Body of pancreas (tissue), 4 donors: ENCODE measurements at regions of chr4 and their contacts with region 1.

Region 1: DNA sequence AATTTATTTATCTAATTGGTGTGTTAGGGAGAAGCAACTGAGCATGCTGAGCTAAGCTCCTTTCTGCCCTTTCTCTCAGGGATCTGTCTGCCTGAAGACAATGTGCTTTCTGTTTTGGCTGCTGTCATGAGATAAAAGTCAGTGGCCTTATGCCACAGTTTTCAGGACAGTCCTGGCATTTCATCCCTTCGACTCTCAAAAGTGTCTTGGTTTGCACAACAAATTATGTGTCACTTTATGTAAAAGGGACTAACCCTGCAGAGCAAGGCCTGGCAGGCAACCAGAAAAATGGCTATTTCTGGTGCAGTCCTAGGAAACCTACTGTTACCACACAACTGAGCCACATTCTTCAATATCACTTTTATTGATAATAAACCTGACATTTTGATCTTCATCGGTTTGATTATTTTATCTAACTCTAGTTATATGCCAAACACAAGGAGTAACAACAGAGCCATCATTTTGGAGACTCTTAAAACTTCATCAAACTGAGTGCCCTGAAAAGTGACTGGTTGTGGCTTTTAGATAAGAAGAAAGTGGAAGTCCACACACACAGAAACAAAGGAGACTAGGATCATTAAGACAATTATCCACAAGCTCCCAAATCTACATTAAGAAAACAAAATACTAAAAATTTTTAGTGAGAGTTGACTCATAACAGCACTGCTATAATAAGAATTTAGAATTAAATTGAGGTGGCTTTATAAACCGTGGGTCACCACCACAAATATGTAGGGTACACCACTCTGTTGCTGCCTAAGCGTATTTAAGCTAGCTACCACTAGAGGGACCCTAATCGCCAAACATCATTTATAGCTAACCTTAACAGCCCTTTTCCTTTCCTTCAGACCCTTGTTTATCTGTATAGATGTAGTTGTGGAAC is 95.9 kb upstream of the PTPN13 start:
- DNase-seq: peak in 2 of 4 donors; percentile 11 to 41
- ATAC-seq: peak; percentile 74
- H3K4me3 ChIP-seq: no peak overlapping the region
- H3K27ac ChIP-seq: no peak overlapping the region
- H3K4me1 ChIP-seq: peaks cover 19% of the 10 kb centered on the region
- H3K27me3 ChIP-seq: no peaks in the 10 kb centered on the region
- CTCF ChIP-seq: peak; percentile 60 to 75 (median 68)
- POLR2A ChIP-seq: no peak

Region 2: GRCh38 chr4:86778175-86778574 is 280.0 kb after region 1 on chr4:
- intact Hi-C with region 1: no loop called
- DNase-seq: no peak
- ATAC-seq: no peak
- H3K4me3 ChIP-seq: no peak overlapping the region
- H3K27ac ChIP-seq: no peak overlapping the region
- H3K4me1 ChIP-seq: no peaks in the 10 kb centered on the region
- H3K27me3 ChIP-seq: no peaks in the 10 kb centered on the region
- CTCF ChIP-seq: no peak
- POLR2A ChIP-seq: no peak

Region 3: GRCh38 chr4:86895692-86896488 is 397.7 kb after region 1 on chr4:
- intact Hi-C with region 1: loop called (anchors 5 kb)
- DNase-seq: peak in 2 of 4 donors; percentile 23 to 61
- ATAC-seq: no peak
- H3K4me3 ChIP-seq: no peak overlapping the region
- H3K27ac ChIP-seq: no peak overlapping the region
- H3K4me1 ChIP-seq: peaks cover 11% of the 10 kb centered on the region
- H3K27me3 ChIP-seq: no peaks in the 10 kb centered on the region
- CTCF ChIP-seq: peak; percentile 39 to 89 (median 82)
- POLR2A ChIP-seq: no peak

Region 4: DNA sequence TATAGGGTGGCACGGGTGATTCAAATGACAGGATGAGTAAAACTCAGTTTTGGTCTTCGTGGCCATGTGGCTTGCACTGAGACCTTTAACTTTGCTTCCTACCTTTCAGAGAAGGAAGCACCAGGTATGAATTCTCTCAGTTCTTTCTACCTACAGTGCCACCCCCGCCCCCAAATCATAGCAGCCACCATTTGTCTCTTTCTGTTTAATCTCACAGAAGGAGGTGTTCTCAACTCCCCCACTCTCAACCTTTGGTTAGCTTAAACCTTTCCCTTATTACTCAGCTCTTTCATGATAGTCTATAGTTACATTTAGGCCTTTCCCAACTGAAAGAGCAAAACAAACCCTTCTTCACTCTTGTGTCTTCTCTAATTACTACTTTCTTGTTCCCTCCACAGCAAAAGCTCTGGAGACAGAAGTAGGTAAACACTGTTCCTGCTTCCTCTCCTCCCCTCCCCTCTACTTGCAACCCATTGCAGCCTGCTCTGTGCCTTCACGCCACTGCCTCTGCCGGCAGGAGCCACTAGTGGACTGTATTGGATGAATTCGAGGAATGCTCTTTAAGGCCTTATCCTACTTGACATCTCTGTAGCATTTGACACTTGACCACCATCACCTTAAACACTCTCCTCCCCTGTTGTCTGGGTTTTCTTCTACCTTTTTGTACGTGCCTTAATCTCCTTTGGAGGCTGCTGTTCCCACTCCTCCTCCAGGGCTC is 560.3 kb after region 1 on chr4:
- intact Hi-C with region 1: no loop called
- DNase-seq: peak in 1 of 4 donors; percentile 48
- ATAC-seq: no peak
- H3K4me3 ChIP-seq: no peak overlapping the region
- H3K27ac ChIP-seq: peak overlapping the region in 2 of 4 donors; percentile 29 to 39
- H3K4me1 ChIP-seq: peaks cover 62% of the 10 kb centered on the region
- H3K27me3 ChIP-seq: no peaks in the 10 kb centered on the region
- CTCF ChIP-seq: peak in 4 of 7 experiments; percentile 12 to 44 (median 28)
- POLR2A ChIP-seq: no peak